Natural killer cell (primary cell): ENCODE measurements at regions of chr20 and their contacts with region 1.

Region 1: GRCh38 chr20:33554914-33555420 is 65.1 kb downstream of the CBFA2T2 start:
- DNase-seq: peak in 1 of 2 donors; percentile 92
- ATAC-seq: peak; percentile 95 to 98 (median 97)
- H3K4me3 ChIP-seq: no peak overlapping the region
- H3K4me3 Mint-ChIP-seq: peak overlapping the region; percentile 69
- H3K27ac ChIP-seq: peak overlapping the region; percentile 88
- H3K27ac Mint-ChIP-seq: peak overlapping the region; percentile 90 to 93
- H3K4me1 ChIP-seq: peaks cover 11% of the 10 kb centered on the region
- H3K4me1 Mint-ChIP-seq: peaks cover 18 to 28% of the 10 kb centered on the region in 2 donors
- H3K27me3 ChIP-seq: no peaks in the 10 kb centered on the region
- H3K27me3 Mint-ChIP-seq: no peaks in the 10 kb centered on the region
- CTCF ChIP-seq: no peak

Region 2: DNA sequence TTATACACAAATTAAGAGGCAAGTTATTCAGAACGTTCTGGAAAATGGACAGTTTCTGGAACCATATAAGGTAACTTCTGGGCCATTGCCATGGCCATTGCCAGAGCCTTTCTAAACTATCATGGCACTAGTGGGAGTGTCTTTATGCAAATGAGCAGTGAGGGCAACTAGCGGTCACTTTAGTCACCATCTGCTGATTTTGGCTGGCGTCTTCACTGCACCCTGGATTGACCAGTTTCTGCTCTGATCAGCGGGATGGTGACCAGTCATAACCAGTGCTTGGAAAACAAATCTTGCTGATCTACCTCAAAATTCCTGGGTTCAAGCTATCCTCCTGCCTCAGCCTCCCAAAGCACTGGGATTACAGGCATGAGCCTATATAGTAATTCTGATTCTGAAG is 104.1 kb before region 1 on chr20:
- intact Hi-C with region 1: no loop called
- DNase-seq: no peak
- ATAC-seq: no peak
- H3K4me3 ChIP-seq: no peak overlapping the region
- H3K4me3 Mint-ChIP-seq: no peak overlapping the region
- H3K27ac ChIP-seq: no peak overlapping the region
- H3K27ac Mint-ChIP-seq: no peak overlapping the region
- H3K4me1 ChIP-seq: no peaks in the 10 kb centered on the region
- H3K4me1 Mint-ChIP-seq: no peaks in the 10 kb centered on the region
- H3K27me3 ChIP-seq: no peaks in the 10 kb centered on the region
- H3K27me3 Mint-ChIP-seq: no peaks in the 10 kb centered on the region
- CTCF ChIP-seq: no peak

Region 3: GRCh38 chr20:33489495-33490022 is 65.4 kb before region 1 on chr20:
- intact Hi-C with region 1: loop called (anchors 2 kb)
- DNase-seq: peak; percentile 98 to 99
- ATAC-seq: peak; percentile 94 to 98 (median 95)
- H3K4me3 ChIP-seq: peak overlapping the region; percentile 48
- H3K4me3 Mint-ChIP-seq: peak overlapping the region; percentile 88
- H3K27ac ChIP-seq: peak overlapping the region; percentile 93
- H3K27ac Mint-ChIP-seq: peak overlapping the region; percentile 88 to 92
- H3K4me1 ChIP-seq: peaks cover 14% of the 10 kb centered on the region
- H3K4me1 Mint-ChIP-seq: peaks cover 0 to 9% of the 10 kb centered on the region in 2 donors
- H3K27me3 ChIP-seq: no peaks in the 10 kb centered on the region
- H3K27me3 Mint-ChIP-seq: no peaks in the 10 kb centered on the region
- CTCF ChIP-seq: no peak

Region 4: DNA sequence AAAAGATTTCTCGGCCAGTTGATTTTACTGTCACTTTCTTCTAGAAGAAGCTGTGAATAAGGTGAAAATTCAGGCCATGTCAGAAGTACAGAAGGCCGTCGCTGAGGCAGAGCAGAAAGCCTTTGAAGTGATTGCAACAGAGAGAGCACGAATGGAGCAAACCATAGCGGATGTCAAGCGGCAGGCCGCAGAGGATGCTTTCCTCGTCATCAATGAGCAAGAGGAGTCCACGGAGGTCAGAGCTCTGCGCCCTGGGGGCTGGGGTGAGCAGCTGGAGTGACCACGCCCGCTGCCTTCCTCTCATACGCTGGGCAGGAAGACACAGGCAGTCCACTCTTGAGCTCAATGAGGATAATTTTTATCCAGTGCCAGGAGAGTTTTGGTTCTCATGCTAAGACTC is 85.3 kb after region 1 on chr20:
- intact Hi-C with region 1: no loop called
- DNase-seq: no peak
- ATAC-seq: no peak
- H3K4me3 ChIP-seq: no peak overlapping the region
- H3K4me3 Mint-ChIP-seq: no peak overlapping the region
- H3K27ac ChIP-seq: no peak overlapping the region
- H3K27ac Mint-ChIP-seq: no peak overlapping the region
- H3K4me1 ChIP-seq: peaks cover 5% of the 10 kb centered on the region
- H3K4me1 Mint-ChIP-seq: no peaks in the 10 kb centered on the region
- H3K27me3 ChIP-seq: no peaks in the 10 kb centered on the region
- H3K27me3 Mint-ChIP-seq: no peaks in the 10 kb centered on the region
- CTCF ChIP-seq: no peak

Region 5: GRCh38 chr20:34516247-34517113 is 961.5 kb after region 1 on chr20 and contains the start of gene DYNLRB1:
- intact Hi-C with region 1: no loop called
- DNase-seq: peak; percentile 94 to 97
- ATAC-seq: peak; percentile 83 to 92 (median 87)
- H3K4me3 ChIP-seq: peak within 1 kb of the TSS; percentile 98
- H3K4me3 Mint-ChIP-seq: peak within 1 kb of the TSS; percentile 98
- H3K27ac ChIP-seq: peak within 1 kb of the TSS; percentile 80
- H3K27ac Mint-ChIP-seq: peak within 1 kb of the TSS; percentile 94 to 98
- H3K4me1 ChIP-seq: peaks cover 22% of the 10 kb centered on the region
- H3K4me1 Mint-ChIP-seq: peaks cover 49 to 54% of the 10 kb centered on the region in 2 donors
- H3K27me3 ChIP-seq: no peaks in the 10 kb centered on the region
- H3K27me3 Mint-ChIP-seq: no peaks in the 10 kb centered on the region
- CTCF ChIP-seq: no peak
- total RNA-seq, gene DYNLRB1: 58.7 to 65.5 (median 61.4) TPM